Endothelial cell of umbilical vein (primary cell): ENCODE measurements at regions of chr3 and their contacts with region 1.

Region 1: DNA sequence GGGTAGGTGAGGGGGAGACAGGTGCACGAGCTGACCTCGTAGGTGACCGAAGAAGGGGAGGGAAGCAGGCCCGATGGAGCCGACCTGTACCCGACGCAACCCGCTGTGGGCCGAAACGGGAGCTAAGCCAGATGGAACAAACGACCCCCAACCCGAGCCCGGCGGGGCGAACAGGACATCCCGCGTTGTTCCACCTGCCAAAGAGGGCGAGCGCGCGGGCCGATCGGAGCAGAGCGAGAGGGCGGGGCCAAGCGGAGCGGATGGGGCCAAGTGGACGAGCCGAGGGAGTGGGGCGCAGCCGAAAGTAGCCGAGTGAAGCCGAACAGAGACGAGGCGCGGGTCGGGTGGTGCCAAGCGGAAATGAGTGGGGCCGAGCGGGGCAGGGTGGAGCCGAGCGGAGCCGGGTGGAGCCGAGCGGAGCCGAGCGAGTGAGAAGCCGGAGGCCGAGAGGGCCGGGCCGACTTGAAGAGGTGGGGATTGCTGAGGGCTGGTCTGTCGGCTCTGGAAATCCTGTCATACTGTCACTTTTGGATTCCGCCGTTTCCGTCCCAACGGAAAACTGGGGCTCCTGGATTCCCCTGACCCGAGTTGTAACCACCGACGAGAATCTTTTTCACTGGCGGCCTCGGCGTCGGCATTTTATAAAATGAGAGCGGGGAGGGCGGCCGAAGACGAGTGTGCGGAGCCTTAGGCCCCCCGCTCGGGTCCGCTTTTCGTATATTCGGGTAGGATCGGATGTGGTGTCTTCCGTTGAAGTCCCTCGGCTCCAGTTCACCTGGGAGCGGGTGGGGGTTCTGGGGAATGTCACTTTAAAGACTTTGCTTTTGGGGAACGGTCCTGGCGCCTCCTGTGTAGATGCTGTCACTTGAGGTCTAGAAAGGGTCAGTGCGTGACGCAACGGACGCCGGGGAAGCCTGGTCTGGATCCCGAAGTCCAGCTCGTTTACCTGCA is 15.6 kb upstream of the WNT7A start:
- DNase-seq: peak; percentile 91
- H3K4me3 ChIP-seq: peak overlapping the region; percentile 22 to 54 (median 33)
- H3K27ac ChIP-seq: no peak overlapping the region
- H3K4me1 ChIP-seq: peaks cover 8% of the 10 kb centered on the region
- H3K27me3 ChIP-seq: no peaks in the 10 kb centered on the region
- CTCF ChIP-seq: no peak
- POLR2A ChIP-seq: no peak

Region 2: GRCh38 chr3:13853978-13854296 is 41.5 kb before region 1 on chr3:
- CTCF ChIA-PET with region 1: no interaction called
- POLR2A ChIA-PET with region 1: no interaction called
- dilution Hi-C with region 1: no loop called
- intact Hi-C with region 1: no loop called
- DNase-seq: no peak
- H3K4me3 ChIP-seq: no peak overlapping the region
- H3K27ac ChIP-seq: no peak overlapping the region
- H3K4me1 ChIP-seq: no peaks in the 10 kb centered on the region
- H3K27me3 ChIP-seq: no peaks in the 10 kb centered on the region
- CTCF ChIP-seq: no peak
- POLR2A ChIP-seq: no peak

Region 3: GRCh38 chr3:13998831-13999230 is 103.4 kb after region 1 on chr3:
- CTCF ChIA-PET with region 1: no interaction called
- POLR2A ChIA-PET with region 1: no interaction called
- dilution Hi-C with region 1: no loop called
- intact Hi-C with region 1: no loop called
- DNase-seq: no peak
- H3K4me3 ChIP-seq: no peak overlapping the region
- H3K27ac ChIP-seq: no peak overlapping the region
- H3K4me1 ChIP-seq: no peaks in the 10 kb centered on the region
- H3K27me3 ChIP-seq: no peaks in the 10 kb centered on the region
- CTCF ChIP-seq: no peak
- POLR2A ChIP-seq: no peak

Region 4: DNA sequence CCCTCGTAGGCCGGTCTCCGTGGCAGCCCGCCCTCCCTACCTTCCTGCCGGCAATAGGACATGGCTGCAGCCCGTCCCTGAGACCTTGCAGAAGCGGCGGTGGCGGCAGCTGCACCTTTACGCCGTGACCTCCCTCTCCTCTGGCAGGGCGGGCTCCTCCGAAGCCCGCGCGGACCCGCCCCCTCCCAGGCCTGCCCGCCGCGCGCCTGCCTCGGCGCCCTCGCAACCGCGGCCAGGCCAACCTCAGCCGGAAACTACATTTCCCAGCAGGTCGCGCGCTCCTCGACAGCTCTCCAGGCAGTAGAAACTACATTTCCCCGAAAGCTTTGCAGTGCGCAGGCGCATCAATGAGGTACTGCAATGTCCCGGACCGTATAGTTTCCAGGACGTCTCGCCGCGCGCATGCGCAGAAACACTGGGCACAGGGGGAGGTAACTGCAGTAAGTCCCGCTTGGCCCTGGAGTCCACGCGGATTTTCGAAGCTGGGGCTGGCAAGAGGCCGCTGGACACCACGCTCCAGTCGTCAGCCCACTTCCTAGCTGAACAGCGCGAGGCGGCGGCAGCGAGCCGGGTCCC is 229.3 kb after region 1 on chr3 and contains the starts of genes CHCHD4 and TMEM43:
- CTCF ChIA-PET with region 1: interaction called, 18 read pairs
- POLR2A ChIA-PET with region 1: interaction called, 3 read pairs
- dilution Hi-C with region 1: no loop called
- intact Hi-C with region 1: loop called (anchors 1 kb)
- DNase-seq: peak; percentile 99
- H3K4me3 ChIP-seq: peak within 1 kb of the TSS; percentile 66 to 90 (median 67)
- H3K27ac ChIP-seq: peak within 1 kb of the TSS; percentile 61
- H3K4me1 ChIP-seq: peaks cover 22% of the 10 kb centered on the region
- H3K27me3 ChIP-seq: no peaks in the 10 kb centered on the region
- CTCF ChIP-seq: peak in 1 of 2 donors; percentile 1
- POLR2A ChIP-seq: peak; percentile 58
- total RNA-seq, gene CHCHD4: 12.4 and 13.6 TPM in 2 replicates
- total RNA-seq, gene TMEM43: 69.6 and 80.6 TPM in 2 replicates

Region 5: GRCh38 chr3:14178247-14179113 is 283.1 kb after region 1 on chr3 and contains the starts of genes LSM3 and XPC:
- CTCF ChIA-PET with region 1: interaction called, 11 read pairs
- POLR2A ChIA-PET with region 1: interaction called, 3 read pairs
- dilution Hi-C with region 1: no loop called
- intact Hi-C with region 1: loop called (anchors 1 kb)
- DNase-seq: peak; percentile 98
- H3K4me3 ChIP-seq: peak within 1 kb of the TSS; percentile 57 to 90 (median 81)
- H3K27ac ChIP-seq: peak within 1 kb of the TSS; percentile 70
- H3K4me1 ChIP-seq: peaks cover 10% of the 10 kb centered on the region
- H3K27me3 ChIP-seq: no peaks in the 10 kb centered on the region
- CTCF ChIP-seq: no peak
- POLR2A ChIP-seq: peak; percentile 95
- total RNA-seq, gene LSM3: 13.0 and 13.6 TPM in 2 replicates
- total RNA-seq, gene XPC: 36.7 and 36.8 TPM in 2 replicates

Region 6: DNA sequence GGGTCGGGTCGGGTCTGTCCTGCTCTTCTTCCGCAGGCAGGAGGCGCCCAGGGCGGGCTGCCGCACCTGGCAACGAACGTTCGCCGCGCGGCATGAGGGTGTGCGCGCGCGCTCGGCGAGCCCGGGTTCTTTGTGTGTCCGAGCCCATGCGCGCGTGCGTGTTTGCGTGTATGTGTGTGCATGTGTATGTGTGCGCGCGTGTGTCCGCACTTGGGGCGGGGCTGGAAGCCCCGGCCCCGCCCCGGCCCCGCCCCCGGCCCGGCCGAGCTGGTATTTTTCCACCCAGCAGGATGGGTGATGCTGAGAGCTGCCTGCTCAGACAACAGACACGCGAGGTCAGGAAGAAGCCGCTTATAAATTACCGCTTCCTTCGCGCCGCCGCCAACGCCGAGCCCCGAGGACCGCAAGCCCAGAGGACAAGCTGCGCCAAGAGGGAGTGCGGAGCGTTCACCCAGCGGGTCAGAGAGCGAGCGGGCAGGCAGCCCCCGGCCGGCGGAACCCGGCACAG is 506.9 kb after region 1 on chr3 and contains the start of gene SLC6A6:
- CTCF ChIA-PET with region 1: interaction called, 3 read pairs
- POLR2A ChIA-PET with region 1: no interaction called
- dilution Hi-C with region 1: no loop called
- intact Hi-C with region 1: loop called (anchors 10 kb)
- DNase-seq: peak; percentile 91
- H3K4me3 ChIP-seq: peak within 1 kb of the TSS; percentile 9 to 90 (median 34)
- H3K27ac ChIP-seq: peak within 1 kb of the TSS; percentile 32
- H3K4me1 ChIP-seq: peaks cover 12% of the 10 kb centered on the region
- H3K27me3 ChIP-seq: no peaks in the 10 kb centered on the region
- CTCF ChIP-seq: peak; percentile 17 to 51
- POLR2A ChIP-seq: peak; percentile 80
- total RNA-seq, gene SLC6A6: 33.8 and 38.0 TPM in 2 replicates

Region 7: GRCh38 chr3:14548321-14548729 is 652.9 kb after region 1 on chr3:
- CTCF ChIA-PET with region 1: interaction called, 29 read pairs
- POLR2A ChIA-PET with region 1: no interaction called
- dilution Hi-C with region 1: no loop called
- intact Hi-C with region 1: loop called (anchors 1 kb)
- DNase-seq: peak; percentile 50
- H3K4me3 ChIP-seq: no peak overlapping the region
- H3K27ac ChIP-seq: no peak overlapping the region
- H3K4me1 ChIP-seq: no peaks in the 10 kb centered on the region
- H3K27me3 ChIP-seq: peaks cover 0 to 3% of the 10 kb centered on the region in 2 experiments
- CTCF ChIP-seq: peak; percentile 69 to 87
- POLR2A ChIP-seq: no peak